ENCODE measurements at regions of chr19 and their contacts with region 1.

Region 1: GRCh38 chr19:40777937-40778705 is at the start of gene RAB4B:
- DNase-seq: peak; percentile 99 to 100 (median 99)
- H3K4me3 ChIP-seq: peak within 1 kb of the TSS; percentile 69 to 89 (median 85)
- H3K4me3 Mint-ChIP-seq: peak within 1 kb of the TSS; percentile 94 to 97
- H3K27ac ChIP-seq: peak within 1 kb of the TSS; percentile 95 to 97
- H3K27ac Mint-ChIP-seq: peak within 1 kb of the TSS; percentile 97 to 100 (median 99)
- H3K4me1 ChIP-seq: peaks cover 19 to 24% of the 10 kb centered on the region in 2 donors
- H3K4me1 Mint-ChIP-seq: peaks cover 33% of the 10 kb centered on the region
- H3K27me3 ChIP-seq: no peaks in the 10 kb centered on the region
- H3K27me3 Mint-ChIP-seq: peaks cover 0 to 1% (median 0%) of the 10 kb centered on the region in 3 donors
- CTCF ChIP-seq: no peak
- polyA plus RNA-seq, gene RAB4B: 89.4 to 132 (median 108) TPM

Region 2: GRCh38 chr19:40716655-40717324 is 61.3 kb before region 1 on chr19 and contains the starts of genes COQ8B and ITPKC:
- intact Hi-C with region 1: loop called in 1 of 2 experiments (anchors 2 kb)
- DNase-seq: peak; percentile 91 to 97 (median 93)
- H3K4me3 ChIP-seq: peak within 1 kb of the TSS; percentile 57 to 91 (median 83)
- H3K4me3 Mint-ChIP-seq: peak within 1 kb of the TSS; percentile 84 to 94
- H3K27ac ChIP-seq: peak within 1 kb of the TSS; percentile 72 to 96
- H3K27ac Mint-ChIP-seq: peak within 1 kb of the TSS; percentile 92 to 98 (median 95)
- H3K4me1 ChIP-seq: peaks cover 60 to 69% of the 10 kb centered on the region in 2 donors
- H3K4me1 Mint-ChIP-seq: peaks cover 75% of the 10 kb centered on the region
- H3K27me3 ChIP-seq: no peaks in the 10 kb centered on the region
- H3K27me3 Mint-ChIP-seq: peaks cover 0 to 6% (median 5%) of the 10 kb centered on the region in 3 donors
- CTCF ChIP-seq: no peak
- polyA plus RNA-seq, gene COQ8B: 16.0 to 44.0 (median 23.4) TPM
- polyA plus RNA-seq, gene ITPKC: 2.7 to 5.7 (median 2.9) TPM

Region 3: GRCh38 chr19:40798223-40798996 is 20.3 kb after region 1 on chr19:
- intact Hi-C with region 1: loop called in 1 of 2 experiments (anchors 1 kb)
- DNase-seq: peak; percentile 100
- H3K4me3 ChIP-seq: peak overlapping the region; percentile 64 to 79 (median 66)
- H3K4me3 Mint-ChIP-seq: peak overlapping the region; percentile 90 to 95
- H3K27ac ChIP-seq: peak overlapping the region; percentile 93 to 94
- H3K27ac Mint-ChIP-seq: peak overlapping the region; percentile 97 to 99 (median 98)
- H3K4me1 ChIP-seq: peaks cover 46 to 49% of the 10 kb centered on the region in 2 donors
- H3K4me1 Mint-ChIP-seq: peaks cover 55% of the 10 kb centered on the region
- H3K27me3 ChIP-seq: no peaks in the 10 kb centered on the region
- H3K27me3 Mint-ChIP-seq: peaks cover 0 to 3% (median 0%) of the 10 kb centered on the region in 3 donors
- CTCF ChIP-seq: peak; percentile 53

Region 4: GRCh38 chr19:40806488-40807468 is 28.7 kb after region 1 on chr19:
- intact Hi-C with region 1: loop called in 1 of 2 experiments (anchors 5 kb)
- DNase-seq: peak; percentile 71 to 84 (median 73)
- H3K4me3 ChIP-seq: peak overlapping the region in 1 of 3 experiments; percentile 12
- H3K4me3 Mint-ChIP-seq: peak overlapping the region; percentile 24 to 72
- H3K27ac ChIP-seq: peak overlapping the region; percentile 19 to 24
- H3K27ac Mint-ChIP-seq: peak overlapping the region; percentile 65 to 90 (median 83)
- H3K4me1 ChIP-seq: peaks cover 58 to 69% of the 10 kb centered on the region in 2 donors
- H3K4me1 Mint-ChIP-seq: peaks cover 82% of the 10 kb centered on the region
- H3K27me3 ChIP-seq: no peaks in the 10 kb centered on the region
- H3K27me3 Mint-ChIP-seq: peaks cover 2 to 7% (median 4%) of the 10 kb centered on the region in 3 donors
- CTCF ChIP-seq: peak; percentile 95

Region 5: DNA sequence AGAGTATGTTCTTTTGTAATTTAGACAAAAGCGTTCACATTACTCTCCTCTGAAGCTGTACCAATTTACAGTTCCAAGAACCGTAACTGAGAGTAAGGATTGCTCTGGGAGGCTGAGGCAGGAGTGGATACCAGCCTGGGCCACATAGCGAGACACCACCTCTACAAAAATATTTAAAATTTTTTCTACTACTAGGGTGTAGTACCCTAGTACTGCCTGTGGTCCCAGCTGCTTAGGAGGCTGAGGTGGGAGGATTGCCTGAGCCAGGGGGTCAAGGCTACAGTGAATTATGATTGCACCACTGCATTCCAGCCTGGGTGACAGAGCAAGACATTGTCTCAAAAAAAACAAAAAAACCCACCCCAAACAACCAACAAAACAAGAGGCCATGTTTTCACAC is 84.2 kb after region 1 on chr19:
- intact Hi-C with region 1: no loop called
- DNase-seq: no peak
- H3K4me3 ChIP-seq: no peak overlapping the region
- H3K4me3 Mint-ChIP-seq: no peak overlapping the region
- H3K27ac ChIP-seq: no peak overlapping the region
- H3K27ac Mint-ChIP-seq: no peak overlapping the region
- H3K4me1 ChIP-seq: no peaks in the 10 kb centered on the region
- H3K4me1 Mint-ChIP-seq: peaks cover 8% of the 10 kb centered on the region
- H3K27me3 ChIP-seq: no peaks in the 10 kb centered on the region
- H3K27me3 Mint-ChIP-seq: peaks cover 0 to 5% (median 0%) of the 10 kb centered on the region in 3 donors
- CTCF ChIP-seq: no peak